Esophagus squamous epithelium (tissue), 5 donors: ENCODE measurements at regions of chr5 and their contacts with region 1.

Region 1: DNA sequence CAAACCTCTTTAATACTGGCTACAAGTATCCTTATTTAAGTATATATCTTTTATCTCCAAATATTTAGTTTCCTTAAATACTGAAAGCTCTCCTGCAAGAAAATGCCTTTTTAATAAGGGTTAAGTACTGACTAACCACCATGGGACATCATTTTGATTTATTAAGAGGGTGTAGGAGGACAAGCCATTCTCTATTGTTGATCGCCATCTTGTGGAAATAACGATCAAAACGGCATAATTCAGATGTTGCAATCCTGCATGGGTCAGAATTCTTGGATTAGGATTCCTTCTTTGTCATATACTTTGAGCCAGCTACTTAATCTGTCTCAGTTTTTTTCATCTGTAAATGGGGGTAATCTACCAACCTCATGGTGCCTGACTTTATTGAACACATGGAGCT is 28.7 kb upstream of the C5orf46 start:
- DNase-seq: no peak
- H3K4me3 ChIP-seq: no peak overlapping the region
- H3K27ac ChIP-seq: no peak overlapping the region
- H3K4me1 ChIP-seq: peaks cover 0 to 33% (median 0%) of the 10 kb centered on the region in 3 donors
- H3K27me3 ChIP-seq: no peaks in the 10 kb centered on the region
- CTCF ChIP-seq: peak in 5 of 6 experiments; percentile 28 to 77 (median 60)
- POLR2A ChIP-seq: no peak

Region 2: GRCh38 chr5:147857302-147858129 is 77.5 kb before region 1 on chr5:
- intact Hi-C with region 1: loop called (anchors 10 kb)
- DNase-seq: no peak
- H3K4me3 ChIP-seq: no peak overlapping the region
- H3K27ac ChIP-seq: no peak overlapping the region
- H3K4me1 ChIP-seq: no peaks in the 10 kb centered on the region
- H3K27me3 ChIP-seq: no peaks in the 10 kb centered on the region
- CTCF ChIP-seq: peak in 5 of 6 experiments; percentile 71 to 88 (median 80)
- POLR2A ChIP-seq: no peak

Region 3: GRCh38 chr5:147887024-147887627 is 47.9 kb before region 1 on chr5:
- intact Hi-C with region 1: loop called (anchors 10 kb)
- DNase-seq: no peak
- H3K4me3 ChIP-seq: no peak overlapping the region
- H3K27ac ChIP-seq: no peak overlapping the region
- H3K4me1 ChIP-seq: peaks cover 0 to 18% (median 3%) of the 10 kb centered on the region in 3 donors
- H3K27me3 ChIP-seq: no peaks in the 10 kb centered on the region
- CTCF ChIP-seq: peak in 5 of 6 experiments; percentile 42 to 80 (median 61)
- POLR2A ChIP-seq: no peak

Region 4: GRCh38 chr5:148070621-148071020 is 135.6 kb after region 1 on chr5:
- intact Hi-C with region 1: no loop called
- DNase-seq: no peak
- H3K4me3 ChIP-seq: no peak overlapping the region
- H3K27ac ChIP-seq: peak overlapping the region in 3 of 4 donors; percentile 42 to 69 (median 49)
- H3K4me1 ChIP-seq: peaks cover 0 to 73% (median 0%) of the 10 kb centered on the region in 3 donors
- H3K27me3 ChIP-seq: no peaks in the 10 kb centered on the region
- CTCF ChIP-seq: no peak
- POLR2A ChIP-seq: no peak